SK-N-SH (cell line): ENCODE measurements at regions of chr11 and their contacts with region 1.

Region 1: GRCh38 chr11:44286268-44286880 is 23.6 kb downstream of the ALX4 start:
- DNase-seq: peak; percentile 86
- H3K4me3 ChIP-seq: no peak overlapping the region
- H3K27ac ChIP-seq: no peak overlapping the region; a peak in 1 of 4 replicates
- H3K4me1 ChIP-seq: peaks cover 0 to 6% of the 10 kb centered on the region in 2 experiments; a peak in 2 of 4 replicates
- H3K27me3 ChIP-seq: no peaks in the 10 kb centered on the region
- CTCF ChIP-seq: peak; percentile 93
- EP300 ChIP-seq: no peak
- RAD21 ChIP-seq: peak; percentile 93

Region 2: GRCh38 chr11:43942912-43943356 is 343.4 kb before region 1 on chr11:
- CTCF ChIA-PET with region 1: no interaction called
- POLR2A ChIA-PET with region 1: no interaction called
- DNase-seq: peak; percentile 61
- H3K4me3 ChIP-seq: peak overlapping the region; percentile 53 to 55
- H3K27ac ChIP-seq: peak overlapping the region in 1 of 2 experiments; percentile 93; a peak in 3 of 4 replicates
- H3K4me1 ChIP-seq: peaks cover 5 to 32% of the 10 kb centered on the region in 2 experiments; a peak in 3 of 4 replicates
- H3K27me3 ChIP-seq: peaks cover 55% of the 10 kb centered on the region
- CTCF ChIP-seq: no peak
- EP300 ChIP-seq: no peak
- RAD21 ChIP-seq: no peak

Region 3: DNA sequence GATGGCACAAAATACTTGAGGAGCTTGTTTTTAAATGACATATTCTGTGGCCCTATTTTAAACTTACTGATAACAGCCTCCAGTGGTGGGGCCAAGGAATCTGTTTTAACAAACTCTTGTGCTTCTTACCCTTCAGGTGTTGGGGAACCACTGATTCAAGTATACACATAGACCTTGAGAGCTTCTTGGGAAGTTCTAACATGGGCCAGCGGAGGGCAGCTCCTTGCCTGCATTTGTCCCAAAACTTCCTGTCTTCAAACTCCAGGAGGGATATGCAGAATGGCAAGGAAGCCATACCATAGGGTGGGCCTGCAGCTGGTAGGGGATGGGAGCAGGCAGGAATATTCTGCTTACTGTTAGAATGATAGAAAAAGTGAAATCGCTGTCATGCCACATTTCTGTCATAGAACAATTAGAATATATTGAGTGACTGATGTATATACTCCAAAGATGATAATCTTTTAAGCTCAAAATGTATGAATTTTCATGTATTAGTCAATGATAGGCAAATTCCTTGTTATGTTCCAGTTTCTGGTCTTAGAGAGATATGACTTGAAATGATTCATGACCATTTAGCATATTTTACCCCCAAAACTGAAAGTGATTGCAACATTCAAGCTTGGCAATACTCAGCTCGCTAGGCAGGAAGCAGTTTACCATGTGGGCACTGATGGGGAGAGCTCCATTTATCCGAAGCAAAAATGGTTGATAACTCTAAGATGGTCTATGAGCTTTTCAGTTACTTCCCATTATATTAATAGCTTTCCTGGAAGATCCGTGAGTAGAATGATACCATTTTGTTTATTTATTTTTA is 181.7 kb before region 1 on chr11:
- CTCF ChIA-PET with region 1: interaction called, 13 read pairs
- POLR2A ChIA-PET with region 1: no interaction called
- DNase-seq: no peak
- H3K4me3 ChIP-seq: no peak overlapping the region
- H3K27ac ChIP-seq: no peak overlapping the region
- H3K4me1 ChIP-seq: no peaks in the 10 kb centered on the region; a peak in 1 of 4 replicates
- H3K27me3 ChIP-seq: no peaks in the 10 kb centered on the region
- CTCF ChIP-seq: peak; percentile 13; the same call in 1 of the 2 replicates
- EP300 ChIP-seq: no peak
- RAD21 ChIP-seq: no peak

Region 4: GRCh38 chr11:44256673-44257291 is 29.6 kb before region 1 on chr11:
- CTCF ChIA-PET with region 1: interaction called, 11 read pairs
- POLR2A ChIA-PET with region 1: no interaction called
- DNase-seq: no peak
- H3K4me3 ChIP-seq: no peak overlapping the region
- H3K27ac ChIP-seq: no peak overlapping the region
- H3K4me1 ChIP-seq: peaks cover 0 to 9% of the 10 kb centered on the region in 2 experiments; a peak in 1 of 4 replicates
- H3K27me3 ChIP-seq: no peaks in the 10 kb centered on the region
- CTCF ChIP-seq: no peak
- EP300 ChIP-seq: no peak
- RAD21 ChIP-seq: no peak

Region 5: GRCh38 chr11:44305470-44306051 is 19.2 kb after region 1 on chr11:
- CTCF ChIA-PET with region 1: interaction called, 15 read pairs
- POLR2A ChIA-PET with region 1: no interaction called
- DNase-seq: peak; percentile 62
- H3K4me3 ChIP-seq: peak overlapping the region; percentile 45 to 59
- H3K27ac ChIP-seq: no peak overlapping the region
- H3K4me1 ChIP-seq: peaks cover 0 to 8% of the 10 kb centered on the region in 2 experiments; a peak in 2 of 4 replicates
- H3K27me3 ChIP-seq: peaks cover 67% of the 10 kb centered on the region
- CTCF ChIP-seq: peak; percentile 5; the same call in 1 of the 2 replicates
- EP300 ChIP-seq: no peak
- RAD21 ChIP-seq: no peak

Region 6: DNA sequence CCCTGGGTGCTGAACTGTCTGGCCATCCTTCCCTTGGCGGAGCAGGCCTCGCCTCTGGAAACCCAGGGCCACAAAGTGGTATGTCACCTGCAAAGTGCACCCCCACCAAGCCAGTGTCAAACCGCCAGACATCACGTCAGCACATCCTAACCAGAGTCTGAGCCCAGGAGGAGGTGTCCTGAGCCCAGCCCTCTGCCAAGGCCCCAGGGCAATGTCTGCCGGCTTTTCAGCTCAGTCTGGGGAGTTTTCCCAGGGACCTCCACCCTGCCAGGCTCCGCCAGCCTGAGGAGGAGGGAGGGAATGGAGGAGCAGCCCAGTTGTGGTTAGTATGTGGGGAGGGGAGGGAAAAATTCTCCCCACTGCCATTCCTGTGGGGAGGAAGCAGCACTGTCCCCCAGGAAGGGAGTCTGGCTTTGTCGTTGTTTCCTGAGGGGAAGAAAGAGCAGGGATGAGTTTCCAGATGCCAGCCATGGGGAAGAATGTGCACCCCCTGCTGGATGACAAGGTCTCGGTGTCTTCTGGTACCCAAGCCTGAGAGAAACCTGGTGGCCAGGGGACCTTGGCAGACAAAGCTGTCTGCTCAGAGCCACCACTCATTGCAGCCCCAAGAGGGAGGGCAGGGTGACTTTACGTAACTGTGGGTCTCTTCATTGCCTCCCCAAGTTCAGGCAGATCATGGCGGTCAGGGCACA is 197.7 kb after region 1 on chr11:
- CTCF ChIA-PET with region 1: interaction called, 17 read pairs
- POLR2A ChIA-PET with region 1: no interaction called
- DNase-seq: peak; percentile 68
- H3K4me3 ChIP-seq: no peak overlapping the region; a peak in 1 of 4 replicates
- H3K27ac ChIP-seq: no peak overlapping the region
- H3K4me1 ChIP-seq: peaks cover 0 to 9% of the 10 kb centered on the region in 2 experiments; a peak in 1 of 4 replicates
- H3K27me3 ChIP-seq: no peaks in the 10 kb centered on the region; the same call in 1 of the 2 replicates
- CTCF ChIP-seq: peak; percentile 45
- EP300 ChIP-seq: no peak
- RAD21 ChIP-seq: peak; percentile 63

Region 7: DNA sequence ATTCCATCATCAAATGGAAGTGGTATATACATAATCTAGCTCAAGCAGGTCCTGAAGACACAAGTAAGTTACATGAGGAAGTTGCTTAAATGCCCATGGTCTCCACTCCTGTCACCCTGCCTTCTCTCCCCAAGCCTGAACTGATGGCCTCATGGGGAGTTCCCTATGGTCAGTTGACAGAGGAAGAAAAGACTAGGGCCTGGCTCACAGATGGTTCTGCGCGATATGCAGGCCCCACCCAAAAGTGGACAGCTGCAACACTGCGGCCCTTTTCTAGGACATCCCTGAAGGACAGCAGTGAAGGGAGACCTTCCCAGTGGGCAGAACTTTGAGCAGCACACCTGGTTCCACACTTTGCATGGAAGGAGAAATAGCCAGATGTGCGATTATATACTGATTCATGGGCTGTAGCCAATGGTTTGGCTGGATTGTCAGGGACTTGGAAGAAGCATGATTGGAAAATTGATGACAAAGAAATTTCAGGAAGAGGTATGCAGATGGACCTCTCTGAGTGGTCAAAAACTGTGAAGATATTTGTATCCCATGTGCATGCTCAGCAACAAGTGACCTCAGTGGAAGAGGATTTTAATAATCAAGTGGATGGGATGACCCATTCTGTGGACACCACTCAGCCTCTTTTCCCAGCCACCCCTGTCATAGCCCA is 261.8 kb after region 1 on chr11:
- CTCF ChIA-PET with region 1: interaction called, 22 read pairs
- POLR2A ChIA-PET with region 1: no interaction called
- DNase-seq: no peak
- H3K4me3 ChIP-seq: no peak overlapping the region
- H3K27ac ChIP-seq: no peak overlapping the region
- H3K4me1 ChIP-seq: no peaks in the 10 kb centered on the region
- H3K27me3 ChIP-seq: no peaks in the 10 kb centered on the region
- CTCF ChIP-seq: no peak
- EP300 ChIP-seq: no peak
- RAD21 ChIP-seq: no peak